Adrenal gland (tissue), 19 donors: ENCODE measurements at regions of chr6 and their contacts with region 1.

Region 1: GRCh38 chr6:8219352-8219943 is 117.1 kb upstream of the EEF1E1 start:
- DNase-seq: peak in 6 of 7 donors; percentile 29 to 76 (median 58)
- H3K4me3 ChIP-seq: no peak overlapping the region
- H3K27ac ChIP-seq: no peak overlapping the region
- H3K4me1 ChIP-seq: no peaks in the 10 kb centered on the region
- H3K27me3 ChIP-seq: no peaks in the 10 kb centered on the region
- CTCF ChIP-seq: peak; percentile 51 to 90 (median 76)
- POLR2A ChIP-seq: no peak

Region 2: DNA sequence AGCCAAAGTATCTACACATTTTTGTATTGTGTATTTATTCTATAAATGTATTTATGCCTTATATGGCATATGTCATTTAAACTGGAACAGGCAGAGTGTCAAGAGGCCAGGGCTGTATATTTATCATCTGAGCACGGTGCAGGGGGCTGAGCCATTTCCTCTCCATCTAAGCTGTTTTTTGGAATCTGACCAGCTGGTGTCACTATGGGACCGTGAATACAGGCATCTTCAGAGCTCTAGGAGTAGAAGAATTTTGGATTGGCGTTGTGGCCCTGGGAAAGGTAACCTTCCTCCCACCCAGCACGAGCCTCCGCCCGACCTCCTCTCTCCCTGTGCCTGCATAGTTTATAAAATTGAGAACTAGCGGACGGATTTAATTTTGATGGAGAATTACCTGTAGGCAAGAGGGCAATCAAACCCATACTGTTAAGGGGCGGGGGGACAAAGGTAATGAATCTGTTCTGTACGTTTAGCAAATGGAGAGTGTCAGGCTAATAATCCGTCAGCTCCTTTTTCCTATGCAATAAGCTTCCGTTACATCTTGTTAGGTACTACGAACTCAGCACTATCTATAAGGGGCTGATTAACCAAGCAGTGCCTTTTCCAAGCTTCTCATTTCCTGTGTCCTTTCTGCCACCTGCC is 88.1 kb before region 1 on chr6:
- intact Hi-C with region 1: loop called (anchors 5 kb)
- DNase-seq: peak; percentile 29 to 69 (median 40)
- H3K4me3 ChIP-seq: no peak overlapping the region
- H3K27ac ChIP-seq: no peak overlapping the region
- H3K4me1 ChIP-seq: no peaks in the 10 kb centered on the region
- H3K27me3 ChIP-seq: no peaks in the 10 kb centered on the region
- CTCF ChIP-seq: peak; percentile 12 to 64 (median 50)
- POLR2A ChIP-seq: no peak

Region 3: GRCh38 chr6:8137529-8137939 is 81.9 kb before region 1 on chr6:
- intact Hi-C with region 1: loop called (anchors 5 kb)
- DNase-seq: no peak
- H3K4me3 ChIP-seq: no peak overlapping the region
- H3K27ac ChIP-seq: no peak overlapping the region
- H3K4me1 ChIP-seq: no peaks in the 10 kb centered on the region
- H3K27me3 ChIP-seq: no peaks in the 10 kb centered on the region
- CTCF ChIP-seq: no peak
- POLR2A ChIP-seq: no peak